Activated B cell treated with CpG ODN at 0.5 μM for 24 hours (primary cell): ENCODE measurements at regions of chr2 and their contacts with region 1.

Region 1: GRCh38 chr2:27050281-27050995 is 1.0 kb upstream of the AGBL5 start:
- DNase-seq: peak; percentile 91
- ATAC-seq: peak; percentile 60
- H3K4me3 Mint-ChIP-seq: peak overlapping the region; percentile 97
- H3K27ac Mint-ChIP-seq: peak overlapping the region; percentile 100
- H3K4me1 Mint-ChIP-seq: peaks cover 19% of the 10 kb centered on the region
- H3K27me3 Mint-ChIP-seq: peaks cover 6% of the 10 kb centered on the region
- CTCF ChIP-seq: no peak

Region 2: DNA sequence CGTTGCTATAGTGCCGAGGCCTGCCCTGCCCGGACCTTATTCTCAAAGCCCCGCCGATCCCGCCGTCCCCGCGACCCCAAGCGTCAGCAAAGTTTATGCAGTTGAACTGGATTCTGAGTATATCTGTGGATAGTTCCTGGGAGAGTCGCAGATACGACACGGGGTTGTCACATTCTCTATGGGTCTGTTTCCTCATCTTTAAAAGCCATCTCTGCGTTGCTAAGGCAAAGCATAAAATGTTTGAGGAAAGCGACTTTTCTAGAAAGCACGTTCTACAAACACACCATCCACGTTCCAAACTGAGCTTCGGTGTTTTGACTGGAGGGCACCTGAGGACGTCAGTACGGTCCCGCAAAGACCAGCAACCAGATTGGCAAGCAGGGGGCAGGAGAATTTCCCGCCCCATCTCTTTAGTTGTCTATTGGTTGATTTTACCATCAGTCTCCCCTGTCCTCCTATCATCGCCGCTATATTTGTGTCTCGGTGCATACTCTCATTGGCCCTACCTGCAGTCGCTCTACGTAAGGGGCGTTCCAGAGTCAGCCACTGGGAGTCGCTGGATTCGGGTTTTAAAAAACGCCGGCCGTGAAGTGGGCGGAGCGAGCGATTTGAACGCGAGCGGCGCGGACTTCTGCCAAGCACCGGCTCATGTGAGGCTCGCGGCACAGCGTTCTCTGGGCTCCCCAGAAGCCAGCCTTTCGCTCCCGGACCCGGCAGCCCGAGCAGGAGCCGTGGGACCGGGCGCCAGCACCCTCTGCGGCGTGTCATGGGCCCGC is 264.8 kb before region 1 on chr2 and contains the start of gene CENPA:
- CTCF ChIA-PET with region 1: no interaction called
- POLR2A ChIA-PET with region 1: no interaction called
- intact Hi-C with region 1: loop called (anchors 10 kb)
- DNase-seq: peak; percentile 87
- ATAC-seq: peak; percentile 99
- H3K4me3 Mint-ChIP-seq: peak within 1 kb of the TSS; percentile 84
- H3K27ac Mint-ChIP-seq: peak within 1 kb of the TSS; percentile 65
- H3K4me1 Mint-ChIP-seq: peaks cover 15% of the 10 kb centered on the region
- H3K27me3 Mint-ChIP-seq: peaks cover 3% of the 10 kb centered on the region
- CTCF ChIP-seq: no peak
- total RNA-seq, gene CENPA: 0.42 TPM in 2 replicates

Region 3: GRCh38 chr2:26970244-26970920 is 80.1 kb before region 1 on chr2 and contains the start of gene MAPRE3:
- CTCF ChIA-PET with region 1: no interaction called
- POLR2A ChIA-PET with region 1: no interaction called
- intact Hi-C with region 1: loop called (anchors 1 kb)
- DNase-seq: peak; percentile 88
- ATAC-seq: peak; percentile 93
- H3K4me3 Mint-ChIP-seq: peak within 1 kb of the TSS; percentile 85
- H3K27ac Mint-ChIP-seq: peak within 1 kb of the TSS; percentile 59
- H3K4me1 Mint-ChIP-seq: peaks cover 21% of the 10 kb centered on the region
- H3K27me3 Mint-ChIP-seq: peaks cover 40% of the 10 kb centered on the region
- CTCF ChIP-seq: no peak
- total RNA-seq, gene MAPRE3: 4.6 and 6.3 TPM in 2 replicates

Region 4: DNA sequence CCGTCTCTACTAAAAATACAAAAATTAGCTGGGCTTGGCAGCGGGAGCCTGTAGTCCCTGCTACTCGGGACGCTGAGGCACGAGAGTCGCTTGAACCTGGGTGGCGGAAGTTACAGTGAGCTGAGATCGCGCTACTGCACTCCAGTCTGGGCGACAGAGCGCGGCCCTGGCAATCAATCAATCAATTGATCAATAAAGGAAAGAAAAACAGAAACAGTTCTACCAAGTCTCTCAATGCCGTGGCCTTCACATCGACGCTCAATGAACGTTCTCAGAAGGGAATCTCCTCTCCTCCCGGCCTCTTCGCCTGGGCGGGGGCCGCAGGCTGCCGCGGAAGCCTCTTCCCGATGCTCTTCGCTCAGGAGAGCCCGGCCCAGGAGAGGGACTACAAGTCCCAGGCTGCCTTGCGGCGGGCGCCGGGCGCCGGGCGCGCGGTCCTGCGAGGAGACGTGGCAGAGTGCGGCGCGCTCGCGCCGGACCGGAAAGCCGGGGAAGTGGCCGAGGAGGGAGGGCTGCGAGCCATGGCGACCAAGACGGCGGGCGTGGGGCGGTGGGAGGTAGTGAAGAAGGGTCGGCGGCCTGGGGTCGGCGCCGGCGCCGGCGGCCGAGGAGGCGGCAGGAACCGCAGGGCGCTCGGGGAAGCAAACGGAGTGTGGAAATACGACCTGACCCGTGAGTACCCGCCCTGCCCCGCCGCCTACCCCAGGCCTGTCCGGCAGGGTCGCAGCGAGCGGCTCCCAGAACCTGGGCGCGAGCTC is 17.8 kb before region 1 on chr2 and contains the start of gene TMEM214:
- CTCF ChIA-PET with region 1: interaction called, 3 read pairs
- POLR2A ChIA-PET with region 1: interaction called, 48 read pairs
- intact Hi-C with region 1: loop called (anchors 1 kb)
- DNase-seq: peak; percentile 76
- ATAC-seq: peak; percentile 95
- H3K4me3 Mint-ChIP-seq: peak within 1 kb of the TSS; percentile 93
- H3K27ac Mint-ChIP-seq: peak within 1 kb of the TSS; percentile 80
- H3K4me1 Mint-ChIP-seq: peaks cover 32% of the 10 kb centered on the region
- H3K27me3 Mint-ChIP-seq: no peaks in the 10 kb centered on the region
- CTCF ChIP-seq: no peak
- total RNA-seq, gene TMEM214: 84.4 and 92.1 TPM in 2 replicates

Region 5: DNA sequence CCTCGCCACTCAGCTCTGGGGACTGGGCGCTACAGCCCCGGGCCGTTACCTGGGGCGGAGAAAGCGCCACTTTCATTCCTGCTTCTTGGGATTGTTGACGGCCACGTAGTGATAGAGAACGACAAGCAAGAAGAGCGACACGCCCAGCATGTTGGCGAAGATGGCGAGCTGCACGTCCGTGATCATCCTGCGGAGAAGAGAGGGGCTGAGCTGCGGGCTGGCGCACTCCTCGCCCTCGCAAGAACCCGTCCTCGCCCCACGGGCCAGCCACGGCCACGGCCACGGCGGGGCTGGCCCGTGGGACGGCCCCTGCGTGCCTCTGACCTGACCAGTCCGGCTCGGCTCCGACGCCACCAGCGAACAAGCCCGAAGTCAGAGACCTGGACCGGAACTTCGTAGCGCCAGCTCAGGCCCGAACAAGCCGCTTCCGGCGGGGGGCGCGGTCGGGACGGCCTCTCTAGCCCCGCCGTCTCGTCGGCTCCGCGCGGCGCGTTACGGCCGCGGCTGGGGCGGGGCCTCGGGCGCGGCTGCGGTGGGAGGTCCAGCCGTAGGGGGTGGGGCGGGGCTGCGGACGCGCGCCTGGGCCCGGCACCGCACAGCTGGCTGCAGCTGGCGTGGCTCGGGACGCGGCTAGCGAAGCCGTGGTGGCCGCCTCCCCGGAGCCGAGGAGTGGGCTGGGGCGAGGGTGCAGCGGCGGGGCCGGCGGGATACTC is 21.0 kb after region 1 on chr2 and contains the start of gene OST4:
- CTCF ChIA-PET with region 1: interaction called, 12 read pairs
- POLR2A ChIA-PET with region 1: interaction called, 204 read pairs
- intact Hi-C with region 1: loop called (anchors 1 kb)
- DNase-seq: peak; percentile 92
- ATAC-seq: peak; percentile 96
- H3K4me3 Mint-ChIP-seq: peak within 1 kb of the TSS; percentile 97
- H3K27ac Mint-ChIP-seq: peak within 1 kb of the TSS; percentile 90
- H3K4me1 Mint-ChIP-seq: peaks cover 67% of the 10 kb centered on the region
- H3K27me3 Mint-ChIP-seq: no peaks in the 10 kb centered on the region
- CTCF ChIP-seq: no peak
- total RNA-seq, gene OST4: 243 and 265 TPM in 2 replicates

Region 6: DNA sequence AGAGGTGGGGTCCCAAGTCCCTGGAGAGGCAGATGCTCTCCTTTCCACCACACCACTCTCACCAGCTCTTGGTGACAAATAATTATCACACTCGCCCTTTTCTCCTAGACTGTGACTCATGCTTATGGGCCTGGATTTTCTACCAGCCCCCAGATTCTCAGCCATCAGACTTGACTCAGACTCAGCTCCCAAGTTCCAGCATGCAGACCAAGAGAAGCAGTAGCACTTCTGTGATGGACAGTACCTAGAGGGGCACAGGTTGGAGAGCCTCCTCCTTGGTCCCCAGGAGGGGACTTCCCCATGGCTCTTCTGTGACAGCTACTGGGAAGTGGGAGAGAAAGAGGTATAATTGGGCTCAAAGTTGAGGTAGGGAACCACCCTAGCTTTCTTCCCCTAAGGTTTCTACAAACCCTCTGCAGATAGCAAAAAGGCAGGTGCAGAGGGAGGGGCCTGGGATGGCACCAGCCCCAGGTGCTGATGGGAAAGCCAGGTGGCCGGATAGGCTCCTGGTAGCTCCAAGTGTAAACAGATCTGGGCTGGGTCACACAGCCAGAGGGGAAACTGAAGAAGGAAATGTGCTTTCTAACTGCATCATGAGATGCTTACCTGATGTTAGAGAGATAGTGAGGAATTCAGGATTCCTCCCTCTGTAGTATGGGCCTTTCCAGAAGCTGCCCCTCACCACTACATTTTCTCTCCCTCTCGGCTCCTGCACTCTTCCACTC is 102.5 kb after region 1 on chr2:
- CTCF ChIA-PET with region 1: no interaction called
- POLR2A ChIA-PET with region 1: no interaction called
- intact Hi-C with region 1: no loop called
- DNase-seq: no peak
- ATAC-seq: no peak
- H3K4me3 Mint-ChIP-seq: no peak overlapping the region
- H3K27ac Mint-ChIP-seq: no peak overlapping the region
- H3K4me1 Mint-ChIP-seq: no peaks in the 10 kb centered on the region
- H3K27me3 Mint-ChIP-seq: peaks cover 17% of the 10 kb centered on the region
- CTCF ChIP-seq: no peak

Region 7: DNA sequence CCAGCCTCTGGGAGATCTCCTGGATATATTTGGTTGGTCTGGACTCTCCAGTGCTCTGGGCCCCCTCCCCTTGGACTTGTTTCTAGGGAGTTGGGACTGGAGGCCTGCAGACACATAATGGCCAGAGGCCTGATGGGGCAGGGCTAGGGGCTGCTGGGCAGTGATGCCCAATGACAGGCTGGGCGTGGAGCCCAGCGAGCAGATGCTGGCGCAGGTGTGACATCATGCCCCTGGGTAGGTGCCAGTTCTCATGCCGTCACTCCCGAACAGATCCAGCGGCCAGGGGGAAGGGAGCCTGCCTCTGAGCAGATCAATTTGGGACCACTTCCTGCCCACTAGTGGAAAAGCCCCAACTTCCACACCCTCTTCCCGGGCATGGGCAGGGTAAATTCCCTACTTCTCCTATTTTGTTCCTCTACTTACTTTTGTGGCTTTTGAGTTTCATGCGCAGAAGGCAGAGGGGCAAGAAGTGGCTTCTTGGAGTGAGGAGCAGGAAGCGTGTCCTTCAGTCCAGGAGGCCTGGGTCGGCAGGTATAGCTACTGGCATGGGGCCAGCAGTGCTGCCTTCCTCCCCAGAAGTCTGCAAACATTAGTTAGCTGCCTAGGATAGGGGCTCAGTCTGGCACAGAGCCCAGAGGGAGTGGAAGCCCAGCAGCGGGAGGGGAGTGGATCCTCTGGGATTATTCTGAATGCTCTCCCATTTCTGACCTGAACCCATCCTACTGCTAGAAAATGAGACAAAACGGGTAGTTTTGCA is 266.4 kb after region 1 on chr2:
- CTCF ChIA-PET with region 1: no interaction called
- POLR2A ChIA-PET with region 1: no interaction called
- intact Hi-C with region 1: no loop called
- DNase-seq: no peak
- ATAC-seq: no peak
- H3K4me3 Mint-ChIP-seq: no peak overlapping the region
- H3K27ac Mint-ChIP-seq: no peak overlapping the region
- H3K4me1 Mint-ChIP-seq: peaks cover 5% of the 10 kb centered on the region
- H3K27me3 Mint-ChIP-seq: no peaks in the 10 kb centered on the region
- CTCF ChIP-seq: no peak

Region 8: DNA sequence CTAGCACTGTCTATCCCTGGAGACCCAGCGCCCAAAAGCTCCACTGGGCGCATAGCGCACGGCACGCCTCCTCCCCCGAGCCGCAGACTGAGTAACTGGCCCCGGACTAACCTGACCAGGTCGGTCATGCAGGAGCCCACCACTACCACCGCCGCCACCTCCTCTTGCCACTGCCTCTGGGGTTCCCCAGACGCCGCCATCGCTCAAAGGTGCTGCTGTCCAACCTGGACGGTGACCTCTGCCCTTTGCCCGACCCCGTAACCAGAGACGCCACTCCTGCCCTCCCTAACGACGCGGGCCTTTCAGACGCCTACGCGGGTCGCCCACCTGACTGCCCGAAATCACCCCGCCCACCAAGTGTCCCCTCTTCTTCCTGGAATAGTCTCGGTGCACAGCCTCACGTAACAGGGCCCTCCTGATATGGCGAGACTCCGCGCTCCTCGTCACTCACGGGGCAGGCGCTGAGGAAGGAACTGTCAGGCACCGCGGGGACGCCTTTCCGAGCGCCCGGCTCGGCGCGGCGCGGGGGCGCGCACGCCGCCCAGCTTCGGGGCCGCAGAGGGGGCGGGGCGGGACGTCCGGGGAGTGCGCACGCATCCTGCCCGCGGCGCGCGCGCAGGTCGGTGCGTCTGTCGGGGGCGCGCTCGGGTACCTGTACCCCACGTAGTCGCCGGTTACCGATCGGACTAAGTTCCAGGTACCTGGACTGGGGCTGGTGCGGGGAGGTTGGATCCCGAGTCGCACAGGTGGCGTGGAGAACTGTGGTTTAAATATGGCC is 839.9 kb after region 1 on chr2 and contains the starts of genes BABAM2 and RBKS:
- CTCF ChIA-PET with region 1: no interaction called
- POLR2A ChIA-PET with region 1: no interaction called
- intact Hi-C with region 1: loop called (anchors 5 kb)
- DNase-seq: peak; percentile 93
- ATAC-seq: peak; percentile 78
- H3K4me3 Mint-ChIP-seq: peak within 1 kb of the TSS; percentile 99
- H3K27ac Mint-ChIP-seq: peak within 1 kb of the TSS; percentile 99
- H3K4me1 Mint-ChIP-seq: peaks cover 74% of the 10 kb centered on the region
- H3K27me3 Mint-ChIP-seq: peaks cover 2% of the 10 kb centered on the region
- CTCF ChIP-seq: no peak
- total RNA-seq, gene BABAM2: 51.9 and 55.6 TPM in 2 replicates
- total RNA-seq, gene RBKS: 2.5 and 3.1 TPM in 2 replicates